PC-9 (cell line): ENCODE measurements at regions of chr1 and their contacts with region 1.

Region 1: GRCh38 chr1:35973536-35974200 is 42.8 kb downstream of the AGO3 start:
- DNase-seq: no peak
- H3K4me3 ChIP-seq: no peak overlapping the region
- H3K27ac ChIP-seq: no peak overlapping the region
- H3K4me1 ChIP-seq: no peaks in the 10 kb centered on the region
- H3K27me3 ChIP-seq: no peaks in the 10 kb centered on the region
- CTCF ChIP-seq: no peak

Region 2: DNA sequence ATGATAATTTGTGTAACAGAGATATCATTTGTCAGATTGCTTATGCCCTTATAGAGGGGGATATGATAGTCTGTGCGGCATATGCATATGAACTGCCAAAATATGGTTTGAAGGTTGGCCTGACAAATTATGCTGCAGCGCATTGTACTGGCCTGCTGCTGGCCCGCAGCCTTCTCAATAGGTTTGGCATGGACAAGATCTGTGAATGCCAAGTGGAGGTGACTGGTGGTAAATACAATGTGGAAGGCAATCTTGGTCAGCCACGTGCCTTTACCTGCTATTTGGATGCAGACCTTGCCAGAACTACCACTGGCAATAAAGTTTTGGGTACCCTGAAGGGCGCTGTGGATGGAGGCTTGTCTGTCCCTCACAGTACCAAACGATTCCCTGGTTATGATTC is 622.8 kb before region 1 on chr1:
- CTCF ChIA-PET with region 1: no interaction called
- POLR2A ChIA-PET with region 1: interaction called, 16 read pairs
- intact Hi-C with region 1: no loop called
- DNase-seq: no peak
- H3K4me3 ChIP-seq: no peak overlapping the region
- H3K27ac ChIP-seq: no peak overlapping the region
- H3K4me1 ChIP-seq: no peaks in the 10 kb centered on the region
- H3K27me3 ChIP-seq: no peaks in the 10 kb centered on the region
- CTCF ChIP-seq: no peak